ENCODE measurements at regions of chr10 and their contacts with region 1.

Region 1: DNA sequence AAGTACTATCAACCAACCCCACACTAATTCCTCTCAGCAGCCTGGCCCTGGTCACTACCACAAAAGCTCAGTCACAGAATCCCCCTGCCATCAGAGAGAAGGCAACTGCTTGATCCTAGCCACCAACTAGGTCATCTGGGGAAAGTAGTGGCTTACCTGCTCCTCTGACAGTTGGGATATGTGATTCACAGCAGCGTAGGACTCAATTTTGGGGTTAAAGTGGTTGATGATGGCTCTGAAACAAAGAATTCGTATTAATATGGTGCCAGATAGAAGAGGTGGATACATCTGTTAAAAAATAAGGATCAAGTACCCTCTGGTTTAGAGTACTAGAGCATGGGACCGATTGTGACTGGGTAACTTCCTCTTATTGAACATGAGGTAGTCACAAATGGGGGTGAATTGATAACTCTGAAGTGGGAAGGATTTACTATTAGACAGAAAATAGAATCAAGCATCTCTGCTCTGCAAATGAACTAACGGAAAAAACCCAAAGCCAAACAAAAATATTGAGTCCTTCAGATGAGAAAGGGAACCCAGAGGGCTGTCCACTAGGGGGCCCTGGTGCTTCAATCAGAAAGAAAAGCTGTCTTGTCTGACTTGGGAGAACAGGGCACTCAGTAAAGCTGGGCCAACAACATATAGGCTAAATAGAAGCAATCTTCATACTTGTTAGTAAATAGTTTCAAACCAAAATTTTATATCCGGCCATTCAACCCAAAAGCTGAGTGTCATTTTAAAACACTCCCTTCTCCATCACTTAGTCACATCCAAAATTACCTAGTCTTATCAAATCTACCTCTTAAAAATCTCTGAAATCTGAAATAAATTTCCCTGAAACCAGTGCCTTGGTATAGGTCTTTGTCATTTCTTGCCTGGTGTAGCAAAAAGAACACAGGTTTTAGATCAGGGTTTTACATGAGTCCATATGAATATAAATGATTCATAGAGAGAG is 45.9 kb upstream of the KCNIP2 start:
- DNase-seq: peak; percentile 68 to 73
- H3K4me3 ChIP-seq: no peak overlapping the region
- H3K27ac ChIP-seq: no peak overlapping the region
- H3K4me1 ChIP-seq: peaks cover 3 to 11% of the 10 kb centered on the region in 2 donors
- H3K27me3 ChIP-seq: no peaks in the 10 kb centered on the region
- CTCF ChIP-seq: peak; percentile 36 to 72 (median 48)
- POLR2A ChIP-seq: no peak

Region 2: GRCh38 chr10:102009801-102010425 is 120.4 kb after region 1 on chr10:
- intact Hi-C with region 1: loop called (anchors 5 kb)
- DNase-seq: peak; percentile 53 to 55
- H3K4me3 ChIP-seq: no peak overlapping the region
- H3K27ac ChIP-seq: no peak overlapping the region
- H3K4me1 ChIP-seq: peaks cover 0 to 3% of the 10 kb centered on the region in 2 donors
- H3K27me3 ChIP-seq: no peaks in the 10 kb centered on the region
- CTCF ChIP-seq: peak; percentile 69 to 98 (median 90)
- POLR2A ChIP-seq: no peak